ENCODE measurements at regions of chr19 and their contacts with region 1.

Region 1: GRCh38 chr19:51570962-51571575 is at the start of gene ZNF175:
- DNase-seq: peak; percentile 93
- H3K4me3 Mint-ChIP-seq: peak within 1 kb of the TSS; percentile 90
- H3K27ac Mint-ChIP-seq: peak within 1 kb of the TSS; percentile 89
- H3K4me1 Mint-ChIP-seq: peaks cover 11% of the 10 kb centered on the region
- H3K27me3 Mint-ChIP-seq: peaks cover 11% of the 10 kb centered on the region
- CTCF ChIP-seq: no peak
- total RNA-seq, gene ZNF175: 10.2 and 16.1 TPM in 2 replicates

Region 2: DNA sequence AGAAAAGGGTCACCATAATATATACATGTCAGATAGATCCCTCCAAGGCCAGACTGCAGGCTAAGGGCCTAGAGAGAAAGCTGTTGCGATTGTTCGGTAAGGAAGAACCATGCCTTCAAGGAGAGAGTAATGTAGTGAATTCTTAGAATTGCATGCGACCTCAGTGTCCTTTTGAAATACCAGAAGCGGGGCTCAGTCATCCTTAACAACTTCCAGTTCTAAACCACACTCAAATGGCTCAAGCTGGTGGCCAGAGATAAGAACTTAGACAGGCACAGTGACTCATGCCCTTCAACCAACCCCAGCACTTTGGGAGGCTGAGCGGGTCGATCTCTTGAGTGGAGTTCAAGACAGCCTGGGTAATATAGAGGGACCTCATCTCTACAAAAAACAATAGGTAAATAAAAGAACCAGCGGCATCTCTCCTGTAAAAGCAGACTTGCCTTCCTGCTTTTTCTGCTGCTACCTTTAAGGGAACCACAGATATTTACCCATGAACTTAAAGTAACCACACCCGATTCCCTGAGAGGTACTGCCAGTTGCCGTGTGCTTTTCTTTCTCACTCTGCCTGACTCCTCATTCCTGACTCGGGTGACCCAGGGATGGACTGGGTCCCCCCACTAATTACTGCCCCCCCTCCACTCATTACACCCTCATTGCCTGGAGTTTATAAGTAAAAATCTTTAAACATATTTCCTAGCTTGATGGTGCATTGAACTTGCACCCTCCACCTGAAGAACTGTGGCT is 24.2 kb before region 1 on chr19:
- CTCF ChIA-PET with region 1: interaction called, 3 read pairs
- intact Hi-C with region 1: loop called (anchors 2 kb)
- DNase-seq: peak; percentile 57
- H3K4me3 Mint-ChIP-seq: no peak overlapping the region
- H3K27ac Mint-ChIP-seq: no peak overlapping the region
- H3K4me1 Mint-ChIP-seq: peaks cover 30% of the 10 kb centered on the region
- H3K27me3 Mint-ChIP-seq: peaks cover 41% of the 10 kb centered on the region
- CTCF ChIP-seq: no peak

Region 3: GRCh38 chr19:51664997-51665396 is 93.9 kb after region 1 on chr19:
- CTCF ChIA-PET with region 1: no interaction called
- intact Hi-C with region 1: no loop called
- DNase-seq: peak; percentile 19
- H3K4me3 Mint-ChIP-seq: no peak overlapping the region
- H3K27ac Mint-ChIP-seq: no peak overlapping the region
- H3K4me1 Mint-ChIP-seq: no peaks in the 10 kb centered on the region
- H3K27me3 Mint-ChIP-seq: peaks cover 56% of the 10 kb centered on the region
- CTCF ChIP-seq: peak; percentile 28

Measured in Calu3 (cell line).